ENCODE measurements at regions of chr3 and their contacts with region 1.

Region 1: GRCh38 chr3:101381809-101382208 is 61.4 kb upstream of the IMPG2 start:
- DNase-seq: no peak
- H3K4me3 ChIP-seq: no peak overlapping the region
- H3K27ac ChIP-seq: no peak overlapping the region
- H3K4me1 ChIP-seq: peaks cover 3 to 18% of the 10 kb centered on the region in 2 donors
- H3K27me3 ChIP-seq: no peaks in the 10 kb centered on the region
- CTCF ChIP-seq: peak; percentile 29 to 58 (median 50)

Region 2: DNA sequence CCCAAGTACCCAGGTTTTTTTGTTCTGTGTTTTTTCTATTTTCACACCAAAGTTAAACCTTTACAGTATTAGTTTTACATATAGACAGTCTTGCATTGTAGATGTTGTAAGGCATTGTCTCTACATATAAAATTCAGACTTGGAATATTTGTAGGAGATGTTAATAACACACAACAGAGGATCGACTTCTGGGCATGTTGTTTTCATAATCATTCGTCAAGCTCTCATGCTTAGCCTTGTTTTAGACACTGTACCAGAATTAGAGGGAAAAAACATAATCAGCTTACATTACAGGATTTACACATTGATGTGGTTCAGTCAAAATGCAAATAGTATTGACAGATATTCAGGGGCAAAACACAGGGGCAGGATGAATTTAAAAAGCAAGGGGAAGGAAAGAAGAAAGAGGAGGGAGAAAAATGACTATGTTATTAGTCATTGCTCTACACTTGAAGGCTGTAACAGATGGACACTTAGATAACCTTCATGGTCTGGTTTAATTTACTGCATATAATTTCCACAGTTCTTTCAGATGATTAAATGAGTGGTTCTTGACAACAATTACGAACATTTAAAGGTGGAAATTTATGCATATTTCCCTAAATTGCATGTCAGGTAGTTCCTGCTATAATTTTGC is 1556.7 kb before region 1 on chr3:
- intact Hi-C with region 1: loop called (anchors 10 kb)
- DNase-seq: no peak
- H3K4me3 ChIP-seq: no peak overlapping the region
- H3K27ac ChIP-seq: no peak overlapping the region
- H3K4me1 ChIP-seq: peaks cover 0 to 4% of the 10 kb centered on the region in 2 donors
- H3K27me3 ChIP-seq: no peaks in the 10 kb centered on the region
- CTCF ChIP-seq: no peak

Region 3: DNA sequence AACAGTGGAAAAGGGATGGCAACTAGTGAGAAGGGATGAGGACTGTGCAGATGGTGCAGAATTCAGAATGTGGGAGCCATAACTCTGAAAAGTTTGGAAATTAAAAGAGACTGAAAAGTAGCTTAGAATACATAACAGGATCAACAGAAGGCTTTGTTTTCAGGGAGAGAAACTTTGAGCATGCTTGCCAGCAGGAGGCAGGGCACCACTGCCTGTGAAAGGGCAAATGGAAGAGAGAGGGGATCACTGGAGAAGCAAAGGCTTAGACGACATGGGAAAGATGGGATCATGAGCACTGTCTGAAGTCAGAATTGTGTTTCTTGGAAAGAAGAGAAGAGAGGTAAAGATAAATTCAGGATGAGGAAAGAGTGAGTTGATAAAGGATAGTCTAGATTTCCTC is 488.2 kb before region 1 on chr3:
- intact Hi-C with region 1: loop called (anchors 10 kb)
- DNase-seq: no peak
- H3K4me3 ChIP-seq: no peak overlapping the region
- H3K27ac ChIP-seq: no peak overlapping the region
- H3K4me1 ChIP-seq: no peaks in the 10 kb centered on the region
- H3K27me3 ChIP-seq: no peaks in the 10 kb centered on the region
- CTCF ChIP-seq: peak; percentile 11 to 58 (median 39)

Region 4: GRCh38 chr3:101229681-101230080 is 152.1 kb before region 1 on chr3:
- intact Hi-C with region 1: loop called (anchors 10 kb)
- DNase-seq: no peak
- H3K4me3 ChIP-seq: no peak overlapping the region
- H3K27ac ChIP-seq: no peak overlapping the region
- H3K4me1 ChIP-seq: no peaks in the 10 kb centered on the region
- H3K27me3 ChIP-seq: no peaks in the 10 kb centered on the region
- CTCF ChIP-seq: peak in 2 of 3 experiments; percentile 20 to 33

Region 5: GRCh38 chr3:101281521-101282030 is 100.2 kb before region 1 on chr3:
- intact Hi-C with region 1: no loop called
- DNase-seq: no peak
- H3K4me3 ChIP-seq: no peak overlapping the region
- H3K27ac ChIP-seq: no peak overlapping the region
- H3K4me1 ChIP-seq: no peaks in the 10 kb centered on the region
- H3K27me3 ChIP-seq: no peaks in the 10 kb centered on the region
- CTCF ChIP-seq: no peak

Measured in ascending aorta (tissue), 2 donors.